ENCODE measurements at regions of chr15 and their contacts with region 1.

Region 1: GRCh38 chr15:39756806-39757522 is 25.7 kb downstream of the FSIP1 start:
- DNase-seq: no peak
- ATAC-seq: no peak
- H3K4me3 Mint-ChIP-seq: no peak overlapping the region
- H3K27ac Mint-ChIP-seq: no peak overlapping the region
- H3K4me1 Mint-ChIP-seq: no peaks in the 10 kb centered on the region
- H3K27me3 Mint-ChIP-seq: no peaks in the 10 kb centered on the region
- CTCF ChIP-seq: peak; percentile 53

Region 2: GRCh38 chr15:39602143-39602542 is 154.8 kb before region 1 on chr15:
- CTCF ChIA-PET with region 1: interaction called, 80 read pairs
- POLR2A ChIA-PET with region 1: no interaction called
- DNase-seq: peak; percentile 40
- ATAC-seq: peak; percentile 87
- H3K4me3 Mint-ChIP-seq: no peak overlapping the region
- H3K27ac Mint-ChIP-seq: no peak overlapping the region
- H3K4me1 Mint-ChIP-seq: no peaks in the 10 kb centered on the region
- H3K27me3 Mint-ChIP-seq: no peaks in the 10 kb centered on the region
- CTCF ChIP-seq: no peak

Region 3: GRCh38 chr15:39654308-39654707 is 102.7 kb before region 1 on chr15:
- CTCF ChIA-PET with region 1: interaction called, 14 read pairs
- POLR2A ChIA-PET with region 1: no interaction called
- DNase-seq: no peak
- ATAC-seq: no peak
- H3K4me3 Mint-ChIP-seq: no peak overlapping the region
- H3K27ac Mint-ChIP-seq: no peak overlapping the region
- H3K4me1 Mint-ChIP-seq: peaks cover 3% of the 10 kb centered on the region; the same call in 1 of the 2 replicates
- H3K27me3 Mint-ChIP-seq: no peaks in the 10 kb centered on the region
- CTCF ChIP-seq: no peak

Region 4: DNA sequence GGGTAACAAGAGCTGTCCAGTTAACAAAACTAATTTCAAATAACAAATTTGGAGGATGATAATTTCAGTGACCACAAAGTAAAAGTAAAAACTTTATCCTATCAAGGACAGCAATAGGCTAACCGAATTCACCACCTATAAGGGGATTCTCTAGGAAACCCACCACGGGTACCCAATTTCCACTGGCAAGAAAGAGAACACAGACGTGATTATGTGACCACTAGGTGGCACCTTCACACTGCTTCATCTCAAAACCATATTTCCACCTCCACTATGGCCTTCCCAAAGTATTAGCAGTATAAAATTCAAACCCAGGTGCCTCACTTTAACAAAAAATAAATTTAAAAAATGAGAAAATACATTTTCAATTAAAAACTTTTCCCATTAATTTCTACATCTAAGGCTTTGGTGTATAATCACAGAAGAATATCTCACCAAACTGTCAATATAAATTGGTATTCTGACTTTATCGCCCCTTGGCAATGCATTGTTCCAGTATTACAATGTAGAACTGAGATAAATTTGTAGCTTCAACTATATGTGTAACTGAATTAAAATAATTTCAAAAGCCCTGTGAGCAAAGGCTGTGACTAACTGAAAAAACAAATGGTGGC is 70.9 kb before region 1 on chr15:
- CTCF ChIA-PET with region 1: interaction called, 53 read pairs
- POLR2A ChIA-PET with region 1: no interaction called
- DNase-seq: peak; percentile 30
- ATAC-seq: peak; percentile 80
- H3K4me3 Mint-ChIP-seq: no peak overlapping the region
- H3K27ac Mint-ChIP-seq: no peak overlapping the region
- H3K4me1 Mint-ChIP-seq: no peaks in the 10 kb centered on the region
- H3K27me3 Mint-ChIP-seq: no peaks in the 10 kb centered on the region
- CTCF ChIP-seq: peak; percentile 84

Region 5: DNA sequence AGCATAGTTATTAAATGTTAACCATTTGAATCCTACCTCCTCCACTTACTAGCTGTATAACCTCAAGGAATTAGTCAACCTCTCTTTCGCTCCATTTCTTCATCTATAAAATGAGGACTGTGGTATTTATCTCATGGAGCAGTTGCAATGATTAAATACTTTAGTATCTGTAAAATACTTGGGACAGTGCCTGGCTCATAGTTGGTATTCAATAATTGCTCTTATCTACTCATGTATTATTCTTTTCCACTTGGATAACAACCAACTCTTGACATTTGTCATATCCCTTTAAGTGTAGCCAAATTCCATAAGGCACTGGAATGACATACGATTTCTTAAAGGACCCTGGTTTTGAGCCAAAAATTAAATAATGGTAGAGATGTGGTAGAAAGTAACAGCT is 46.3 kb before region 1 on chr15:
- CTCF ChIA-PET with region 1: interaction called, 11 read pairs
- POLR2A ChIA-PET with region 1: no interaction called
- DNase-seq: no peak
- ATAC-seq: no peak
- H3K4me3 Mint-ChIP-seq: no peak overlapping the region
- H3K27ac Mint-ChIP-seq: no peak overlapping the region
- H3K4me1 Mint-ChIP-seq: 0 out of 2 replicates have a peak, but pooled peaks cover 2% of the 10 kb centered on the region
- H3K27me3 Mint-ChIP-seq: no peaks in the 10 kb centered on the region
- CTCF ChIP-seq: no peak

Region 6: DNA sequence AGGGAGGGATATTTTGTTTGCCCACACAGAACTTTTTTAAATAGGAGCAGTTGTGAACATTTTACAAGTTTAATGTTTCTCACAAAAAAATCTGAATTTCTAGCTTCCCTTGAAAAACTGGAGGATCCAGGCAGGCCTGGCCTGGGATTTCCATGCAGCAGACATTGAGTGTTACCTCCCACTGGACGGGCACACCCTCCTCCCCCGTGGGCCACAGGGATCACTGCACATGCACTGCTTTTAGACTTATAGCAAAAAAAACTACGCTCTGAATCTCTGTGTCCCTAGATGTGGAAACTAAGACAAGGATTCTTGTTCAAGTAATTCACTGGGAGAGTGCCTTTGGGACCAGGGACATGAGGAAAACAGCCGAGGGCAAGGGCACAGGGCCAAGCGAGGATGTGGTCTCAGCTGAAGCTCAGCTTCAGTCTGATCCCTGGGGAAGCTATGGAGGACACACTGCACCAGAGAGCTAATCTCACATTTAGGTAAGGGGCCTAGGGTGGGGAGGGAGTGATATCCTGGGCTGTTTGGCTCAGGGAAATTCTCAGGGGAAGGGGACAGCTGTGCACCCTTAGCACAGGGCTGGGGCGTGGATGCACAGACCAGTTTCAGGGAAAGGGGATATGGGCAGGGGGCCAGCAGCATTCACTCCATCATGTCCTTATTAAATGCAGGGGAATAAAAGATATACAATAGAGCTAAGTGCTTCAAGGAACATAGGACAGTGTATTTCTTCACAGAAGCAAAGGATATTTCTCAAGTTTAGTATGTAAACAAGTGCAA is 20.4 kb before region 1 on chr15:
- CTCF ChIA-PET with region 1: interaction called, 42 read pairs
- POLR2A ChIA-PET with region 1: no interaction called
- DNase-seq: no peak
- ATAC-seq: no peak
- H3K4me3 Mint-ChIP-seq: no peak overlapping the region
- H3K27ac Mint-ChIP-seq: no peak overlapping the region
- H3K4me1 Mint-ChIP-seq: no peaks in the 10 kb centered on the region
- H3K27me3 Mint-ChIP-seq: no peaks in the 10 kb centered on the region
- CTCF ChIP-seq: no peak

Region 7: DNA sequence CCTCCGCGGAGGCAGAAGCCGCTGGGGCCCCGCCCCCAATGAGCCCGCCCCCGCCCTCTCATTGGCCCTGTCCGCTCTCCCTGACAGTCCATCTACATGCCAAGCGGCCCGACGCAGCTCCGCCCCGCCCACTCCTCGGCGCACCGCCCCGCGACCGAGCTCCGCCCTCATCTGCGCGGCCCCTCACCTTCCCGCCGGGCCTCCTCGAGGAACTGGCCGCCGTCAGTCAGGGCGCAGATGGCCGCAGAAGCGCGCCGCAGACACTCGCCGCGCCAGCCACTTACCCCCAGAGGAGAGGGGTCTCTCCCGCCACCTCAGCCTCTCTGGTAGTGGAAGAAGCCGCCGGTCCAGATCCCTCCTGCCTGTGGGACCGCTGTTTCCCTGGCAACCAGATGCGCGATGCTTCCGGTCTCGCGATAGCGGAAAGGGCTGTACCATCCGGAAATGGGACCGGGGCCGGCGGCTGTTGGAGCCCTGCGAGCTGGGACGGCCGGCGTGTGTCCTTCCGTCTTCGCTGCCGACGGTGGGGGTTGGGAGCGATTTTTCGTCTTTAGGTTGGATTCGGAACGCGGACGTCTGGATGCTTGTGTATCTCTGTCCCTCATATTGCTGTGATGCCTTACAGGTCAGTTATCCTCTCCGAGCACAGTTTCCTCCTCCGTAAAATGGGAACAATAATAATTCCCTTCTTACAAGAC is 25.6 kb after region 1 on chr15 and contains the start of gene FSIP1:
- CTCF ChIA-PET with region 1: interaction called, 12 read pairs
- POLR2A ChIA-PET with region 1: no interaction called
- DNase-seq: peak; percentile 97
- ATAC-seq: peak; percentile 97
- H3K4me3 Mint-ChIP-seq: peak within 1 kb of the TSS; percentile 79
- H3K27ac Mint-ChIP-seq: peak within 1 kb of the TSS; percentile 89
- H3K4me1 Mint-ChIP-seq: peaks cover 52% of the 10 kb centered on the region
- H3K27me3 Mint-ChIP-seq: no peaks in the 10 kb centered on the region
- CTCF ChIP-seq: no peak
- total RNA-seq, gene FSIP1: 0.55 to 0.61 TPM (median 0.60 TPM) in 3 replicates